CD8-positive, alpha-beta T cell (primary cell): ENCODE measurements at regions of chr14 and their contacts with region 1.

Region 1: GRCh38 chr14:105045710-105046326 is 19.4 kb downstream of the GPR132 start:
- DNase-seq: peak; percentile 86 to 98 (median 93)
- ATAC-seq: peak; percentile 90
- H3K4me3 ChIP-seq: no peak overlapping the region
- H3K4me3 Mint-ChIP-seq: no peak overlapping the region
- H3K27ac ChIP-seq: no peak overlapping the region
- H3K27ac Mint-ChIP-seq: peak overlapping the region; percentile 83
- H3K4me1 ChIP-seq: peaks cover 5% of the 10 kb centered on the region
- H3K4me1 Mint-ChIP-seq: peaks cover 9% of the 10 kb centered on the region
- H3K27me3 ChIP-seq: no peaks in the 10 kb centered on the region
- H3K27me3 Mint-ChIP-seq: no peaks in the 10 kb centered on the region
- CTCF ChIP-seq: peak; percentile 100

Region 2: DNA sequence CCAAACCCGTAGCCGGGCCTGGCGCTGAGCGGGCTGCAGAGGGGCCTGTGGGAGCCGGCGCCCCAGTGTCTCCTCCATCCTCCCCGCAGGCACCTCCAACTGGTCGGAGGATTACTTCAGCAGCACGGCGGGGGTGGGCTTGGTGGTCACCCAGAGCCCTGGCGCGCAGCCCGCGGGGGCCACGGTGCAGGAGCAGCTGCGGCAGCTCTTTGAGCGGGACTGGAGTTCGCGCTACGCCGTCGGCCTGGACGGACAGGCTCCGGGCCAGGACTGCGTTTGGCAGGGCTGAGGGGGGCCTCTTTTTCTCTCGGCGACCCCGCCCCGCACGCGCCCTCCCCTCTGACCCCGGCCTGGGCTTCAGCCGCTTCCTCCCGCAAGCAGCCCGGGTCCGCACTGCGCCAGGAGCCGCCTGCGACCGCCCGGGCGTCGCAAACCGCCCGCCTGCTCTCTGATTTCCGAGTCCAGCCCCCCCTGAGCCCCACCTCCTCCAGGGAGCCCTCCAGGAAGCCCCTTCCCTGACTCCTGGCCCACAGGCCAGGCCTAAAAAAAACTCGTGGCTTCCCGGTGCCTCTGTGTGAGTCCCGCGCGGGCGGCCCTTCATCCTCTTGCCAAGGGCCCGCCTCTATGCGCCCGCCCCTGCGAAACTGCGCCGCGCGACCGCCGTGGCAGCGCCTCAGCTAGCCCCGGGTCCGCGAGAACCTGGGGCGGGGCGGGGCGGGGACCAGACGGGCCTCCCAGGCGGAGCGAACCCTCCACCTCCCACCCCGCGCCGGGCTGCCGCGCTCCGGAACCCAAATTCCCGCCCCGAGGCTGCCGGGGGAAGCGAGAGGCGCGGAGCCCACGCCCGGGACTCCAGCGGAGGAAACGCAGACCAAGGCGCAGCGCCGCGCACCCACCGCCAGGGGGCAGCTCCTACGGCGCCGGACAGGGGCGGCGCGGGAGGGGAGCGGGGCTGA is 112.9 kb before region 1 on chr14:
- CTCF ChIA-PET with region 1: interaction called, 3 read pairs
- POLR2A ChIA-PET with region 1: no interaction called
- intact Hi-C with region 1: loop called in 1 of 2 experiments (anchors 1 kb)
- DNase-seq: peak; percentile 68 to 91 (median 81)
- ATAC-seq: peak; percentile 96
- H3K4me3 ChIP-seq: peak overlapping the region; percentile 39 to 53
- H3K4me3 Mint-ChIP-seq: peak overlapping the region; percentile 61
- H3K27ac ChIP-seq: no peak overlapping the region
- H3K27ac Mint-ChIP-seq: no peak overlapping the region
- H3K4me1 ChIP-seq: no peaks in the 10 kb centered on the region
- H3K4me1 Mint-ChIP-seq: peaks cover 6% of the 10 kb centered on the region
- H3K27me3 ChIP-seq: no peaks in the 10 kb centered on the region
- H3K27me3 Mint-ChIP-seq: peaks cover 11% of the 10 kb centered on the region
- CTCF ChIP-seq: peak; percentile 54

Region 3: GRCh38 chr14:104976198-104977007 is 69.4 kb before region 1 on chr14:
- CTCF ChIA-PET with region 1: interaction called, 172 read pairs
- POLR2A ChIA-PET with region 1: interaction called, 4 read pairs
- intact Hi-C with region 1: loop called (anchors 1 kb)
- DNase-seq: peak; percentile 76 to 94 (median 88)
- ATAC-seq: peak; percentile 88
- H3K4me3 ChIP-seq: no peak overlapping the region
- H3K4me3 Mint-ChIP-seq: peak overlapping the region; percentile 67
- H3K27ac ChIP-seq: no peak overlapping the region
- H3K27ac Mint-ChIP-seq: no peak overlapping the region
- H3K4me1 ChIP-seq: peaks cover 8% of the 10 kb centered on the region
- H3K4me1 Mint-ChIP-seq: peaks cover 12% of the 10 kb centered on the region
- H3K27me3 ChIP-seq: peaks cover 9 to 16% of the 10 kb centered on the region in 2 experiments
- H3K27me3 Mint-ChIP-seq: peaks cover 22% of the 10 kb centered on the region
- CTCF ChIP-seq: peak; percentile 84

Region 4: DNA sequence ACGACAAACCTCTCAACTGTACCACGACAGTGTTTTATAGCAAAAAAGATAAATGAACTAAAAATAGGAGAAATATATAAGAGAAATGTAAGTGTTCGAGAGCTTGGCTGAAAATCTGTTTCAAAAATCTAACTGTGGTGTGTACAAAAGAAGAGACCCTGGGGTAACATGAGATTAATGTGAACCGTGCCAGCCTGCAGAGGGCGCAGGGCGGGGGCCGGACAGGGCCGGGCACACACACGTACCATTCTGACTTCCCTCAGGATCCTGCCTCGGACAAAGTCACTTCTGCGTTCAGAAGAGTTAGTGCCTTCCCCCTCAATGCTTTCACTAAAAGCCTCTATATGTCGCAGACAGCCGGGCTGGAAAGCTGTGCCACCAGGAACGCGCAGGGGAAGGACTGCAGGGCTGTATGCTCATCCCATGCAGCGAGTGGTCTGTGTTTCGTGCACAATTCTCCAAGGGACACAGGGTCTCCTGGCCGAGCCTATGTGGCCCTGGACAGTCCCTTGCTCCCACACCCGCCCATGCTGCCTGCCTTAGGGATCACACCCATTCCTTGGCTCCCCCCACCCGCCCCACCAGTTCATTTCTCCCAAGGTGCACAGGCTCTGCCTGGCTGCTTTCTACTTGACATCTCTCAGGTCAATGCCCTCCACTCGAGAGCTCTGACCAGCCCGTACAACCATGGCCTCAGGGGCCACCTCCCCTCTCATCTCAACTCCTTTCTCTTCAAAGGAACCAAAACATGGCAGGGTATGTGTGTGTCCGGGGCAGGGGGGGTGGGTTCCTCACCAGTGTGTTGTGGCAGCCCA is 33.4 kb before region 1 on chr14:
- CTCF ChIA-PET with region 1: interaction called, 74 read pairs
- POLR2A ChIA-PET with region 1: no interaction called
- intact Hi-C with region 1: no loop called
- DNase-seq: no peak
- ATAC-seq: no peak
- H3K4me3 ChIP-seq: no peak overlapping the region
- H3K4me3 Mint-ChIP-seq: no peak overlapping the region
- H3K27ac ChIP-seq: no peak overlapping the region
- H3K27ac Mint-ChIP-seq: peak overlapping the region; percentile 37
- H3K4me1 ChIP-seq: no peaks in the 10 kb centered on the region
- H3K4me1 Mint-ChIP-seq: peaks cover 32% of the 10 kb centered on the region
- H3K27me3 ChIP-seq: no peaks in the 10 kb centered on the region
- H3K27me3 Mint-ChIP-seq: no peaks in the 10 kb centered on the region
- CTCF ChIP-seq: no peak

Region 5: GRCh38 chr14:105026803-105027563 is 18.8 kb before region 1 on chr14:
- CTCF ChIA-PET with region 1: interaction called, 74 read pairs
- POLR2A ChIA-PET with region 1: interaction called, 7 read pairs
- intact Hi-C with region 1: no loop called
- DNase-seq: no peak
- ATAC-seq: no peak
- H3K4me3 ChIP-seq: no peak overlapping the region
- H3K4me3 Mint-ChIP-seq: no peak overlapping the region
- H3K27ac ChIP-seq: peak overlapping the region in 1 of 2 experiments; percentile 73
- H3K27ac Mint-ChIP-seq: no peak overlapping the region
- H3K4me1 ChIP-seq: peaks cover 4% of the 10 kb centered on the region
- H3K4me1 Mint-ChIP-seq: peaks cover 15% of the 10 kb centered on the region
- H3K27me3 ChIP-seq: no peaks in the 10 kb centered on the region
- H3K27me3 Mint-ChIP-seq: no peaks in the 10 kb centered on the region
- CTCF ChIP-seq: no peak

Region 6: DNA sequence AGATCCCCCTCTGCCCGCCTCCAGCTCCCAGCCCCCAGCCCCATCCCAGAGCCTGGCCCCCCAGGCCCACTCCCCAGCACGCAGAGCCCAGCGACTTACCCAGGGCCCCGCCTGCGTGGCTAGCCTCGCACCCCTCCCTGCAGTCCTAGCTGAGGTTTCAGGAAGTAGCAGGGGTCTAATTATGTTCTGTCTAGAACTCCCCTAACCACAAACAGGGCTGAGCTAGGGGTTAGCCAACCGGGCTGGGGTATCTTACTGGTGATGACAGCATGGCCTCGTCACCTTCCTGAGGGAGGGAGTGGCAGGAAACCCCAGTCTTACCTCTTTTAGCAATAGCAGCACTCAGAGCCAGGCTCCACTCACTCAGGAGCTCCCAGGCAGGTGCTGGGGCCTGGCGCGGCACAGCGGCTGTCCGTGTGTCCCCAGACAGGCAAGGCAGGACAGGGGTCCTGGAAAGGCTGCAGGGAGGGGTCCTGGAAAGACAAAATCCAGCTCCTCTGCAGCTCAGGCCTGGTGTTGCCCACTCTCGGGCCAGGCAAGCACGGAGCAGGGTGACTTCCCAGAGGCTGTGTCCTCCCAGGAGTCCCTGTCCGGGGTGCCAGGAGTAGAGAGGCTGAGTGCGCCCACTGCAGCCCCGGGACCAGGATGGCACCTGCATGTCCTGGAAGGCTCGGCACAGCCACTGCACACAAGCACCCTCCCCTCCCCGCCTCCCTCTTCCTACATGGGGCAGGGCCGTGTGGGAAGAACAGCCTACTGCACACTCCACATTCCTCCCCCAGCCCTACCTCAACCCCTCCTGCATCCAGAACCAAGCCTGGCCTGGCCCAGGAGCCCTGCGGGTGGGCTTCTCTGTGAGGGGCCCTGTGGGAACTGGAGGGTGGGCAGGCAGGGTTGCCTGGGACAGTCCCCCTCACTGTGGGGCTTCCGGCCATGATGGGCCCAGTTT is 19.7 kb after region 1 on chr14 and contains the start of gene GPR132:
- CTCF ChIA-PET with region 1: interaction called, 118 read pairs
- POLR2A ChIA-PET with region 1: interaction called, 12 read pairs
- intact Hi-C with region 1: loop called in 1 of 2 experiments (anchors 2 kb)
- DNase-seq: peak; percentile 79 to 99 (median 89)
- ATAC-seq: peak; percentile 87
- H3K4me3 ChIP-seq: peak within 1 kb of the TSS; percentile 90 to 92
- H3K4me3 Mint-ChIP-seq: peak within 1 kb of the TSS; percentile 94
- H3K27ac ChIP-seq: peak within 1 kb of the TSS; percentile 97 to 98
- H3K27ac Mint-ChIP-seq: peak within 1 kb of the TSS; percentile 98
- H3K4me1 ChIP-seq: peaks cover 88% of the 10 kb centered on the region
- H3K4me1 Mint-ChIP-seq: peaks cover 75% of the 10 kb centered on the region
- H3K27me3 ChIP-seq: no peaks in the 10 kb centered on the region
- H3K27me3 Mint-ChIP-seq: no peaks in the 10 kb centered on the region
- CTCF ChIP-seq: no peak
- total RNA-seq, gene GPR132: 91.8 to 101 TPM